Stomach (tissue), 19 donors: ENCODE measurements at regions of chr6 and their contacts with region 1.

Region 1: DNA sequence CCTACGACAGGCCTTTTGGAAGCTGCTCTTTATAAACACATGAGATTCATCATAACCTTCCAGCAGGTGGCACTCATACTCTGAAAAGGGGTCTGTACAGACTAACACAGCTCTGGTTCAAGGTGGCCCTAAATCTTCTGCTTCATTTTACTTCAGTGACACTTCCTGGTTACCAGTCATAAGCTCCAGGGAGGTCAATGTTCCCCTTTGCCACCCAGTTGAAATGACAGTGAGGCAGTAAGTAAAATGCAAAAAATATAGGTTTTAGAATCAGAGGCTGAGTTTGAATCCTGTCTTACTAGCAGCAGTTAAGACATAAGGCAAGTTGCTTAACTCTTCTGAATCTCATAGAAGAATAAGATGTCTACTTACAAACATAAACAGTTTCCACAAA is 132.8 kb downstream of the CDK19 start:
- DNase-seq: peak; percentile 52 to 94
- H3K4me3 ChIP-seq: no peak overlapping the region
- H3K27ac ChIP-seq: peak overlapping the region in 1 of 5 donors; percentile 16
- H3K4me1 ChIP-seq: peaks cover 0 to 23% (median 11%) of the 10 kb centered on the region in 4 donors
- H3K27me3 ChIP-seq: no peaks in the 10 kb centered on the region
- CTCF ChIP-seq: peak in 5 of 7 experiments; percentile 26 to 76 (median 69)
- EP300 ChIP-seq: no peak
- POLR2A ChIP-seq: no peak

Region 2: DNA sequence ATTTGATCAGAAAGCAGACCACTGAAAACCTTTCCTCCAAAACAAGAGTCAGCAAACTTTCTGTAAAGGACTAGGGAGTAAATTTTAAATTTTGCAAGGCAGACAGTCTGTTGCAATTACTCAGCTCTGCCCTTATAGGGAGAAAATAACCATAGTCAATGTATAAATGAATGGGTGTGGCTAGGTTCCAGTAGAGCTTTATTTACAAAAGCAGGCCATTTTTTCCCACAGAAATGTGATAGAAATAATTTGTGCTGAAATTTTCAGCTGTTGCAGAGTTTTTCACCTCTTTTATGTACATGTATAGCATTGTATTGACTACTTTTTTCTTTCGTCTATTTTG is 199.8 kb after region 1 on chr6:
- intact Hi-C with region 1: loop called (anchors 10 kb)
- DNase-seq: peak in 1 of 2 donors; percentile 44
- H3K4me3 ChIP-seq: peak overlapping the region in 1 of 4 donors; percentile 7
- H3K27ac ChIP-seq: no peak overlapping the region
- H3K4me1 ChIP-seq: peaks cover 57 to 99% (median 87%) of the 10 kb centered on the region in 4 donors
- H3K27me3 ChIP-seq: no peaks in the 10 kb centered on the region
- CTCF ChIP-seq: no peak
- EP300 ChIP-seq: no peak
- POLR2A ChIP-seq: no peak